Activated CD4-positive, alpha-beta T cell treated with anti-CD3 and anti-CD28 coated beads for 36 hours (primary cell): ENCODE measurements at regions of chr7 and their contacts with region 1.

Region 1: DNA sequence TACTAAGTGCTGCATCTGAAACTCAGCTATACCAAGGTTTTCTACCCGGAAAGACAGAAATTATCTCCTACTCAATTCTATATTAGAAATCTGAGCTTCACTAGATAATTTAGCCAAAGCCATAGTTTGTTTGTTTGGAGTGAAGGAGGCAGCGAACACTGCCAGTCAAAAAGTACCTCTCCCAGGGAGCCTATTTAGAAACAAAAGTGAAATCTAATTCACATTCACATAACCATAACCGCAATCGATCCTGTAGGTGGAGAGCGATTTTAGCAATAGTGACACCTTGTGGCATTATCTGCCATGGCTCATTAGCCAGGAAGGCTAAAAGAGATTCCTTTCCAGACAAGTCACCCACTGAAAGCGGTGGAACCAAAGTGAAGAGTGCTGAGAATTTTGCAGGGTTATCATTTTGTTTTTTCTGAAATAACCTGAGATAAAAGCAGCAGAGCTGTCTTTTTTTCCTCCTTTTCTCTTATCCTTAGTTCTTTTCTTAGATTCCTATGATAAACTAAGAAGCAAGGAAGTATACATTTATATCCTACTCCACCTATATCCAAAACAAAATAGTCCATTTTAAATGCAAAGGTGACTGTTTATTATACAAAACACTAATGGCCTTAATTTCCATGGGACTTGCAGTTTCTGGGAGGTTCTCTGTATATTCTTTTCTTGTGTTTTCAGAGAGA is 83.7 kb upstream of the BET1 start:
- DNase-seq: peak; percentile 60
- ATAC-seq: peak; percentile 89
- H3K4me3 Mint-ChIP-seq: peak overlapping the region; percentile 29
- H3K27ac Mint-ChIP-seq: no peak overlapping the region
- H3K4me1 Mint-ChIP-seq: peaks cover 10% of the 10 kb centered on the region
- H3K27me3 Mint-ChIP-seq: peaks cover 22% of the 10 kb centered on the region

Region 2: GRCh38 chr7:93442478-93443224 is 645.2 kb before region 1 on chr7:
- CTCF ChIA-PET with region 1: interaction called, 3 read pairs
- POLR2A ChIA-PET with region 1: no interaction called
- intact Hi-C with region 1: loop called in 1 of 2 experiments (anchors 10 kb)
- DNase-seq: peak; percentile 62
- ATAC-seq: peak; percentile 58
- H3K4me3 Mint-ChIP-seq: no peak overlapping the region
- H3K27ac Mint-ChIP-seq: no peak overlapping the region
- H3K4me1 Mint-ChIP-seq: no peaks in the 10 kb centered on the region
- H3K27me3 Mint-ChIP-seq: no peaks in the 10 kb centered on the region

Region 3: DNA sequence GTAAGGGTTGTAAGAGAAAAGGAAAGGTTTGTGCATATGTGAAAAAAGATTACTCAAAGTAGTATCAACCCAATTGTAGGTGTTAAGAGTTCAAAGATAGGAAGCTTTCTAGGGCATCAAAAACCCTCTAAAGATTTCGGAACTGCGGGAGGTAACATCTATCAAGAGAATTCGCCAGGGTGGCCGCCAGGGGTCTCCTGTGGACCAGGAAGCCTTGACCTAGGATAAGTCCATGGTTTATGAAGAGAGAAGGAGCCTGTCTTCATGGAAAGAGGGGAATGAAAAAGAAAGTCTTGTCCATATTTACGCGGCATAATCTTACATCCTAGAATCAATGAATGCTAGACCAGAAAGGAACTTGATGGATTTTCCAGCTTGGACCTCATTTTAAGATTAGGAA is 372.6 kb before region 1 on chr7:
- CTCF ChIA-PET with region 1: interaction called, 7 read pairs
- POLR2A ChIA-PET with region 1: no interaction called
- intact Hi-C with region 1: loop called in 1 of 2 experiments (anchors 1 kb)
- DNase-seq: peak; percentile 60
- ATAC-seq: no peak
- H3K4me3 Mint-ChIP-seq: no peak overlapping the region
- H3K27ac Mint-ChIP-seq: no peak overlapping the region
- H3K4me1 Mint-ChIP-seq: no peaks in the 10 kb centered on the region
- H3K27me3 Mint-ChIP-seq: peaks cover 8% of the 10 kb centered on the region

Region 4: DNA sequence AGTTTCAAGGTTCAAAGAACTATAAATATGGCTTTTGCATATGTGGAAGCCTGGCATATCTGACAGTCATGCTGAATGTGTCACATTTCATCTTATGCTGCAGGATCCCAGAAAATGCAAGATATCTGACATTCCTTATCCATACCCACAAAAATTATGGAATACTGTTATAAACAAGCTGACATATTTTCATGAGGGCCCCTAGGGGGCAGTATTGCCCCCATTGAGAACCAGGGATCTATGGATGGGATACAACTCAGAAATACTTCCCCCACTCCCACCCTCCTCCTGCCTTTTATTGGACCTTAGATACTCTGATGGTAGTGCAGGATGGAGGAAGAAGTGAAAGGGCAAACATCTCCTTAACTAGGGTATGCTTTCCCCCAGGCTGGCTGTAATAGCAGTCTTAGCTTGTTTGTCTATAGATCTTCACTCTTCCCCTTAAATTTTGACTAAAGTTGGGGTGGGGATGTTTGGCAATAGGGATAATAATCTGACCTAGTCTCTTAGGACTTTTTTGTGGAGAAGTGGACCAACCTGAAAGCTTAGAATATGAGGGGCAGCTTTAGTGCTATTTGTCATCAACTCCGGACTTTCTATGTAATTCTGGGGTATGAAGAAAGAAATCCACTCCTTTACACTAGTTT is 184.9 kb before region 1 on chr7:
- CTCF ChIA-PET with region 1: interaction called, 7 read pairs
- POLR2A ChIA-PET with region 1: no interaction called
- intact Hi-C with region 1: loop called (anchors 1 kb)
- DNase-seq: peak; percentile 25
- ATAC-seq: no peak
- H3K4me3 Mint-ChIP-seq: no peak overlapping the region
- H3K27ac Mint-ChIP-seq: no peak overlapping the region
- H3K4me1 Mint-ChIP-seq: no peaks in the 10 kb centered on the region
- H3K27me3 Mint-ChIP-seq: peaks cover 11% of the 10 kb centered on the region

Region 5: GRCh38 chr7:94059746-94060145 is 28.1 kb before region 1 on chr7:
- CTCF ChIA-PET with region 1: no interaction called
- POLR2A ChIA-PET with region 1: no interaction called
- intact Hi-C with region 1: no loop called
- DNase-seq: no peak
- ATAC-seq: no peak
- H3K4me3 Mint-ChIP-seq: no peak overlapping the region
- H3K27ac Mint-ChIP-seq: no peak overlapping the region
- H3K4me1 Mint-ChIP-seq: peaks cover 16% of the 10 kb centered on the region
- H3K27me3 Mint-ChIP-seq: peaks cover 26% of the 10 kb centered on the region

Region 6: DNA sequence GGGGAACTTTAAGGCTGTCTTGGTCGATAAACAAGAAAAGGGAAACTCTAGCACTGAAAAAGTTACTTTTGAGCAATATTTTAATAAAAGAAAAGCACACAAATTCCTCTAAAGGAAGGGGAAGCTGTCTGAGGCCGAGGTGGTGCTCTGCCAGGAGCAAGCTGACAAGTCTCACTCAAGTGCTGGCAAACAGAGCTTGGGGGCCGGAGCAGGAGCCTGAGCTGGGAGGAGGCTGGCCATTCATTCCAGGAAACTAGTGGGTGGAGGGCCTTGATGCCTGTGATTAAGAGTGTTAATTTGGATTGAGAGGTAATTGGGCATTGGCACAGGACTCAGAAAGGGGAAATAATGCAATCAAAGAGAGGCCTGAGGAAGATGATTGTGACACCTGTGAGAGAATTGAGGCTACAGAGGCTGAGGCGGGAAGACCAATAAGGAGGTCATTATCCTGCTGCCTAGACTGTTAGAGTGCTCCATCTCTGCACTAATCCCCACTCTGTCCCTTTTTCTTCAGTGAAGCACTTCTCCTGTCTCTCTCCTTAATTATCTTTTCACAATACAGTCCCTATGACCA is 151.9 kb after region 1 on chr7:
- CTCF ChIA-PET with region 1: no interaction called
- POLR2A ChIA-PET with region 1: no interaction called
- intact Hi-C with region 1: no loop called
- DNase-seq: no peak
- ATAC-seq: no peak
- H3K4me3 Mint-ChIP-seq: no peak overlapping the region
- H3K27ac Mint-ChIP-seq: no peak overlapping the region
- H3K4me1 Mint-ChIP-seq: no peaks in the 10 kb centered on the region
- H3K27me3 Mint-ChIP-seq: no peaks in the 10 kb centered on the region

Region 7: DNA sequence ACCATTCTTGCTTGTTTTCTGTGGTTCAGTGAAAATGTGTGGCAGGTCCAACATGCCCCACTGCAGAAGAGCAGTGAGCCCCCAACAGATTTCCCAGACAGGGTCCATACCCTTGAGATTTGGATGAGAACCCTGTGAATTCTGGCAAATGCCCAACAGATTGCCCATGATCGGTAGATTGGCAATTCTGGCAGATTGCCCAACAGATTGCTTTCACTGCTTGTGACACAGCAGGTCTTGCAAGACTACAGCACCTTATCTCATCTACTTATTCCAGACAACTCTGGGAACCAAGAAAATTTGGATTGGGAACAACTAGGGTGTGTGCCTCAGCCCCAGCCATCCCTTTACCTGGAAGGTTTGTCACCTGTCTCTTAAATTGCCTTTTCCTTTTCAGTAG is 163.2 kb after region 1 on chr7:
- CTCF ChIA-PET with region 1: no interaction called
- POLR2A ChIA-PET with region 1: no interaction called
- intact Hi-C with region 1: no loop called
- DNase-seq: no peak
- ATAC-seq: no peak
- H3K4me3 Mint-ChIP-seq: no peak overlapping the region
- H3K27ac Mint-ChIP-seq: no peak overlapping the region
- H3K4me1 Mint-ChIP-seq: no peaks in the 10 kb centered on the region
- H3K27me3 Mint-ChIP-seq: peaks cover 2% of the 10 kb centered on the region

Region 8: DNA sequence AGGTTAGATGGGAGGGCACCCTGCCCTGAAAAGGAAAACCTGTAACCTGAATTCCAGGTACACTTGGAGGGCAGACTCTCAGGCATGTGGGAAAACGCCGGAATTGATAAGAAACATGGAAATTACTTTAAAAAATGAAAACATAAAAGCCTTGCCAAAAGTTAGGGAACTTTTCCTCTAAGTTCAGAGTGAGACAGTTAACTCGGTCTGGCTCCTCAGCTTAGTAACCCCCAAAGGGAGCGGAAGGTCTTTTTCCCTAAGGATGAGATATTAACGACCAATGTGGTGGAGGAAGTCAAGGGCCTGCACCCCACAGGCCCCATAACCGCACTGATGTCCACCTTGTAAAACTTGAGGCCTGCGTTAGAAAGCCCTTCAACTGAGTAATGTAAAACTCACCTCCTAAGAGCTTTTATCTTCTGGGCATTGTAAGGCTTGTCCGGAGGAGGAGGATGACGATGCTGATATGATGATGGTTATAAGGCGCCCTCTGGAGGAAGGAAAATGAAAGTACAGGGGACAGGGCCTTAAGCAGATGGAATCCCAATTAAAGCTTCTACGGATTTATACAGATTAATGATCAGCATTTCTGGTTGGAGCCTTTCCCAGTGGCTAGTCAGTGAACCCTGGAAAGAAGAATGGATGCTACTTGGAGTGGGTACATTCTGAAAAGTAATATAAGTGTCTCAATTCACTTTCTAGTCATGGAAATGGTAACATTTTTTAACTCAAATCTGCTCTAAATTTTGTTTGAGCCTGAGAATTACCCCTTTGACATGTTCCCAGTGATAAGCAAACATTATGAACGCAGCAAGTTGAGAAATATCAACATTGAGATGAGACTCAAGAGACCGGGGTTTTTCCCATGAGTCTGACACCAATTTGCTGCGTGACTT is 307.6 kb after region 1 on chr7:
- CTCF ChIA-PET with region 1: no interaction called
- POLR2A ChIA-PET with region 1: no interaction called
- intact Hi-C with region 1: loop called in 1 of 2 experiments (anchors 10 kb)
- DNase-seq: peak; percentile 41
- ATAC-seq: peak; percentile 80
- H3K4me3 Mint-ChIP-seq: no peak overlapping the region
- H3K27ac Mint-ChIP-seq: no peak overlapping the region
- H3K4me1 Mint-ChIP-seq: peaks cover 8% of the 10 kb centered on the region
- H3K27me3 Mint-ChIP-seq: peaks cover 23% of the 10 kb centered on the region